CD4-positive, alpha-beta T cell (primary cell): ENCODE measurements at regions of chr2 and their contacts with region 1.

Region 1: DNA sequence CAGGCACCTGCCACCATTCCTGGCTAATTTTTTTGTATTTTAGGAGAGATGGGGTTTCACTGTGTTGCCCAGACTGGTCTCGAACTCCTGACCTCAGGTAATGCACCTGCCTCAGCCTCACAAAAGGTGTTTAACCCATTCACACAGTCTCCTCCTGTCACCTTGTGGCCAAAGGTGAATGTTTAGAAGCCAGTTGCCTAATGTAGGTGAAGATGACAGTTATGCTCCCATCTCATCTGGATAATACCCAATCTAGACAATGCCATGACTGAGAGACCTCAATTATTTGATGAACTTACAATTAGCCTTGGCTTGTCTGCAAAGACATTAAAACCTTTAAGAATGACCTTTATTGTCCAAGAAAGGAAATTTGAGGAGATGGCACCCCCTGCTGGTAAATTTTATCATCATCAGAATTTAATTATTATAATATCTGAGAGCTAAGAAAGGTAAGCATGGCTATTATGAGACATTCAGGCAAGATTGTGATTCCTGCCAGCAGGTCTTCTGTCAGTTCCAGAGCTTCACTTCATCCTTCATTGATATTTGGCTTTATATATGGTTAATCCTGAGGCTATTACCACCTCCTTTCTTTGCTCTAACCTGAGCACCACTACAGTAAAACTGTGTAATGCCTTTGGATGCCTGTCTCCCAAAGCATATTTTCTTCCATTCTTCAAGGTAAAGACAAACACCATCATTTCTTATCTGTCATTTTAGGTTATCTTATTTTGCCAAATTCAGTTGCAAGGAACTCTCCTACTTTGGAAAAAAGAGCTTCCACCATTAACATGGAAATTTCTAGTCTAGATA is 117.6 kb downstream of the FAM124B start:
- DNase-seq: peak in 5 of 14 experiments; percentile 2 to 60 (median 44)
- ATAC-seq: no peak
- H3K4me3 ChIP-seq: no peak overlapping the region
- H3K4me3 Mint-ChIP-seq: no peak overlapping the region
- H3K27ac ChIP-seq: no peak overlapping the region
- H3K27ac Mint-ChIP-seq: no peak overlapping the region
- H3K4me1 ChIP-seq: no peaks in the 10 kb centered on the region
- H3K4me1 Mint-ChIP-seq: no peaks in the 10 kb centered on the region
- H3K27me3 ChIP-seq: peaks cover under 1 to 18% of the 10 kb centered on the region in 2 experiments
- H3K27me3 Mint-ChIP-seq: peaks cover 40% of the 10 kb centered on the region
- CTCF ChIP-seq: peak; percentile 62

Region 2: GRCh38 chr2:222973237-222973636 is 1311.1 kb before region 1 on chr2:
- CTCF ChIA-PET with region 1: no interaction called
- POLR2A ChIA-PET with region 1: no interaction called
- intact Hi-C with region 1: loop called in 1 of 2 experiments (anchors 5 kb)
- DNase-seq: no peak
- ATAC-seq: no peak
- H3K4me3 ChIP-seq: no peak overlapping the region
- H3K4me3 Mint-ChIP-seq: no peak overlapping the region
- H3K27ac ChIP-seq: no peak overlapping the region
- H3K27ac Mint-ChIP-seq: no peak overlapping the region
- H3K4me1 ChIP-seq: peaks cover 5% of the 10 kb centered on the region
- H3K4me1 Mint-ChIP-seq: no peaks in the 10 kb centered on the region
- H3K27me3 ChIP-seq: peaks cover 0 to 5% of the 10 kb centered on the region in 2 experiments
- H3K27me3 Mint-ChIP-seq: peaks cover 13% of the 10 kb centered on the region
- CTCF ChIP-seq: no peak

Region 3: GRCh38 chr2:223727562-223727961 is 556.8 kb before region 1 on chr2:
- CTCF ChIA-PET with region 1: no interaction called
- POLR2A ChIA-PET with region 1: no interaction called
- intact Hi-C with region 1: loop called in 1 of 2 experiments (anchors 5 kb)
- DNase-seq: peak in 7 of 14 experiments; percentile 1 to 59 (median 33)
- ATAC-seq: no peak
- H3K4me3 ChIP-seq: no peak overlapping the region
- H3K4me3 Mint-ChIP-seq: no peak overlapping the region
- H3K27ac ChIP-seq: no peak overlapping the region
- H3K27ac Mint-ChIP-seq: no peak overlapping the region
- H3K4me1 ChIP-seq: no peaks in the 10 kb centered on the region
- H3K4me1 Mint-ChIP-seq: no peaks in the 10 kb centered on the region
- H3K27me3 ChIP-seq: peaks cover 0 to 3% of the 10 kb centered on the region in 2 experiments
- H3K27me3 Mint-ChIP-seq: peaks cover 6% of the 10 kb centered on the region
- CTCF ChIP-seq: peak; percentile 52

Region 4: GRCh38 chr2:224242543-224242942 is 41.8 kb before region 1 on chr2:
- CTCF ChIA-PET with region 1: no interaction called
- POLR2A ChIA-PET with region 1: no interaction called
- intact Hi-C with region 1: no loop called
- DNase-seq: no peak
- ATAC-seq: no peak
- H3K4me3 ChIP-seq: no peak overlapping the region
- H3K4me3 Mint-ChIP-seq: no peak overlapping the region
- H3K27ac ChIP-seq: no peak overlapping the region
- H3K27ac Mint-ChIP-seq: no peak overlapping the region
- H3K4me1 ChIP-seq: no peaks in the 10 kb centered on the region
- H3K4me1 Mint-ChIP-seq: no peaks in the 10 kb centered on the region
- H3K27me3 ChIP-seq: peaks cover 0 to 4% of the 10 kb centered on the region in 2 experiments
- H3K27me3 Mint-ChIP-seq: peaks cover 15% of the 10 kb centered on the region
- CTCF ChIP-seq: no peak